GM13976 (cell line): ENCODE measurements at regions of chr10 and their contacts with region 1.

Region 1: DNA sequence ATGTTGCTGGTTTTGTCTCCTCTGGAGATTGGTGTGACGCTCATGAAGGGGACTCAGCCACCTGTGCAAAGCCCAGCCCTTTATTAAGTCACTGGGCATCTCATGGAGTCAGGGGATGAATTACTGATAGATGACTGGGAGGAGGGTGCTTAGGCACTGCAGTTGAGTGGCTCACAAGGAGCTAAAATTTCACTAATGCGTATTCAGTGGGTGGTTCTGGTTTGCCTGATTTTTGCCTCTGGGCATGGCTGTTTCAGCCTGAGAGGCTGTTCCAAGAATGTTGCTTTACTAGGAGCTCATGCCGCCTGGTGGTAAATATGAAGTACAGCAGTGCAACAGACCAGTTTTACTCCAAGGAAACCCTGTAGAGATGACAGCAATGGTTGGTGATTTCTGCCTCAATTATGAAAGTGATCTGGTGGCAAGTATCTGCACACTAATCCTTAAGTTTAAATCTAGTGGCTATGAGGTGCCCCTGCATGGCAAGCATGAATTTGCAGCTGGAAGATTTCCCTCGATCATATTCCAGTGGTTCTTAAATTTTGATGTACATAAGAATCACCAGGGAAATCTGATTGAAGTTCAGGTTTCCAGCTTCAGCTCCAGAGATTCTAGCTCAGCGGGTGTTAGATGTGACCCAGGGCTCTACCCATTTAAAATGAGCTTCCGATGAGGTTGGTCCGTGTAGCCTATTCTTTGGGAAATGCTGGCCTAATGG is 19.9 kb downstream of the ACTA2 start:
- DNase-seq: peak; percentile 29
- CTCF ChIP-seq: peak; percentile 89

Region 2: GRCh38 chr10:88565072-88565471 is 367.6 kb before region 1 on chr10:
- in situ Hi-C with region 1: loop called (anchors 10 kb)
- DNase-seq: peak; percentile 27
- CTCF ChIP-seq: peak; percentile 20

Region 3: GRCh38 chr10:88728107-88728763 is 204.5 kb before region 1 on chr10:
- in situ Hi-C with region 1: no loop called
- DNase-seq: peak; percentile 33
- CTCF ChIP-seq: no peak

Region 4: DNA sequence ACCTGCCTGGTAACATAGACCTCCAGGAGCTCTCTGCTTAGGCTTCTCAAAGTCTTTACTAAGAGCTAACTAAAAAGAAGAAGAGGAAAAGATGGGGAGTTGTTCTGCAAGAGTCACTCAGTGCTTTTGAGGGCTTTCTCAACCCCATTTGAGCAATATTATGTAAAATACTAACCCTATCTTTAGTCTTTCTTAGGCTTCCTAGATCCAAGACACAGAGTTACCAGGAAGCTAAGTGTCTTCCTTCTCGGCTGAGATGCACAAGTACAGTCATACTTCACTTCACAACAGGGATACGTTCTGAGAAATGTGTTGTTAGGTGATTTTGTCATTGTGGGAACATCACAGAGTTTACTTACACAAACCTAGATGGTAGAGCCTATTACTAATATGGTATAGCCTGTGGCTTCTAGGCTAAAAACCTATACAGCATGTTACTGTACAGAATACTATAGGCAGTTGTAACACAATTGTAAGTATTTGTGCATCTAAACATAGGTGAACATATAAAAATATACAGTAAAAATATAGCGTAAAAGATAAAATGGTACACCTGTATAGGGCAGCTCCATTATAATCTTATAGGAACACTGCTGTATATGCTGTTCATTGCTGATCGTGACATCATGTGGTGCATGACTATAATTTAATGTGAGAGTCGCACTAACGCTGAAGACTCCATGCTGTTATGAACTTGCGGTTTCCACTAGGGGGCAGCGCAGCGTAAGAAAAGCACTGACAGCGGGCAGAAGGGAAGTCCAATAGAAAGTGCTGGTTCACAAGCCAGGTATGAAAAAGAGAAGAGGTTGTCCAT is 97.4 kb before region 1 on chr10:
- in situ Hi-C with region 1: loop called (anchors 5 kb)
- DNase-seq: peak; percentile 40
- CTCF ChIP-seq: peak; percentile 87

Region 5: DNA sequence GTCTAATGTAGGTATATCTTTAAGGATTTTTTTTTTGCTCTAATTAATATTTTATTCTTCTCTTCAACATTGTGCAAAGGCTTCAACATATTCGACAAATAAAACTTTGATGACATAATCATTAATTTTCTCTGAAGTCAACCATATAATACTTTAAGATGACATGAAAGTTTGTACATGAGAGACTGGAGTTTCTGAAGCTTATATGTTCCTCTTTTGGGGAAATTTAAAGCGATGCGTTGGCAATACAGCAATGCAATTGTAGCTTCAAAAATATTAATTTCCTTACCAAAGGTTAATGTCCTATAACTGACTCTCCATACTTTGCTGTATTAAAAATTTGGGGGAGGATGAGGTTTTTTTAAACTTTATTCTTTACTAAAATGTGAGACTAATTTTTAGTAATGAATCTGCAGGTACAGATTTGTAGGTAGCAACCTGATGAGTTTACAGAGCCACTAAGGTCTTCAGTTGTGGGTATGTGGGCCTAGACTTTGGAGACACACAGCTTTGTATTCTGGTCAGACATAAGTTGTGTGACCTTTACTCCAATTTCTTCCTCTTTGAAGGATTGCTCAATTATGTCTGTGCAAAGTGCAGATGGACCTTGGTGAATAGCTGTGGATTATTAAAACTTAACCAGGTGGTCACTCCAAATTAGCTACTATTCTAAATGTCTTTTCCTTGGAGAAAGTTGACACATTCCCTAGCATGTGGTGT is 336.9 kb after region 1 on chr10:
- in situ Hi-C with region 1: no loop called
- DNase-seq: no peak
- CTCF ChIP-seq: no peak